T-cell (primary cell): ENCODE measurements at regions of chr5 and their contacts with region 1.

Region 1: DNA sequence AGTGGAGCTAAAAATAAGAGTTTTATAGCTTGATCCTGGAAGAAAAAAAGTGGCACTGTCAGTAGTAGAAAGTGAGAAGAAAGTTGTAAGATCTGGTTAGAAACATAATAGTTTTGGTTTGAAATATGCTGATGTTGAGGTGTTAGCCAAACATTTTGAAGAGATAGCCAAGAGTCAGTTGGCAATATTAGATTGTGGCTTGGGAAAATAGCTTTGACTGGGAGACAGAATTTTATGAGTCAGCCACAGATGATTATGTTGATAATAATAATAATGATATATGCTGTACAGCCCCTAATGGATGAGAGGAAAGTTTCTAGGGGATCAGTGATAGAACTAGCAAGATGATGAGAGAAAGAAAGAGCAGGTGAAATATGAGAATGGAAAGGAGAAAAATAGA is 12.4 kb upstream of the CDH18 start:
- DNase-seq: no peak
- ATAC-seq: no peak
- H3K4me3 ChIP-seq: no peak overlapping the region
- H3K4me3 Mint-ChIP-seq: no peak overlapping the region
- H3K27ac ChIP-seq: no peak overlapping the region
- H3K27ac Mint-ChIP-seq: no peak overlapping the region
- H3K4me1 ChIP-seq: no peaks in the 10 kb centered on the region
- H3K4me1 Mint-ChIP-seq: no peaks in the 10 kb centered on the region
- H3K27me3 ChIP-seq: no peaks in the 10 kb centered on the region
- H3K27me3 Mint-ChIP-seq: no peaks in the 10 kb centered on the region

Region 2: DNA sequence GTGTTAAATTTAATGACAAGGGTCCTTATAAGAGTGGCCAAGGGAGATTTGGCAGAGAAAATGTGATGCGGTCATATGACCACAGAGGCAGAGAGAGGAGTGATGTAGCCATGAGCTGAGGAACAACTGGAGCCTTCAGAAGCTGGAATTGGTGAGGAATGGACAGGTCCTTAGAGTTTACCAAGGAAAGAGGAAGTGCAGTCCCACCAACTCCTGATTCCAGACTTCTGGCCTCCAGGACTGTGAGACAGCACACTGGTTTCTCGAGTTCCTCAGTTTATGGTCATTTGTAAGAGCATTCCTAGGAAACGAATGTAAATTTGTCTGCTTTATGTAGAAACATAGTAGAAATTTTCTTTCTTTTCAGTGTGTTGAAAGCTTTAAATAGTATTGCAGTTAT is 422.5 kb before region 1 on chr5:
- CTCF ChIA-PET with region 1: no interaction called
- POLR2A ChIA-PET with region 1: interaction called in 1 of 2 experiments, 11 read pairs
- DNase-seq: no peak
- ATAC-seq: no peak
- H3K4me3 ChIP-seq: no peak overlapping the region
- H3K4me3 Mint-ChIP-seq: no peak overlapping the region
- H3K27ac ChIP-seq: no peak overlapping the region
- H3K27ac Mint-ChIP-seq: no peak overlapping the region
- H3K4me1 ChIP-seq: no peaks in the 10 kb centered on the region
- H3K4me1 Mint-ChIP-seq: no peaks in the 10 kb centered on the region
- H3K27me3 ChIP-seq: no peaks in the 10 kb centered on the region
- H3K27me3 Mint-ChIP-seq: no peaks in the 10 kb centered on the region

Region 3: DNA sequence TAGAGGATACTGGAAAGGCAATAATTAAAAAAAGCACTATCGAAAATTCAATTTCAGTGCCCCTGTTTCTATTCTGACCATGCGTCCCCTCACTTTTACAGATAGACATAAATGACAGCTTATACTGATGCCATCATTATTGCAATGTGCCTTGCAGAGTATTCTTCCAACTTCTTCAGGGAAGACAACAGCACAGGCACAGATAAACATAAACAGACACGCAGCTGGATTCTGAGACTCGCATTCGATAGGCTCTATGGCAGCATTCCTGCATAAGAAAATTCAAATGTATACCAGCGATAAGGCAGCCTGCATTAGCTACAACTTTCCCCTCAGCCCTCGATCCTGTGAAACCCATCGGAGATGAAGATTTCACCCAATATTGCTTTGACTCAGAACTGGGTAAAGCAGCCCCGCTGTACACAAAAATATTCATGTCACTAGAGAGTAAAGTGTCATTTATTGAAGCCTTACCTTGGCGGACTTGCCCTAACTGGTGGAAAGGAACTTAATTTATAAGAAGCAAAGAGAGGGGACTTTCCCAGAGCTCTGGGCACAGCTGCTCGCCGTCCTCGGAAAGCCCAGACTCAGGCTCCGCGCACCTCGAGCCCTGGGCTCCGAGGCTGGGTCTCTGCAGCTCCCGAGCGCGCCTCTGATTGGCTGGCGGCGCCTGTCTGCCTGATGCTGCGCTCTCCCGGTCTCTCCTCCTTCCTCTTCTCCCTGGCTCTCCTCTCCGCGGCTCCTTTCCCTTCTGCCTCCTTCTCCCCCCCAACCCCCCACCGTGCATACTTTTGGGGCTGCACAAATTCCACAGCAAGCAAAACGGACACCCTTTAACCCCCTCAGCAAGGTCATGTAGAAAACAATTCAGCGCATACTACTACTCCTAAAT is 12.6 kb before region 1 on chr5 and contains the start of gene CDH18:
- CTCF ChIA-PET with region 1: no interaction called
- POLR2A ChIA-PET with region 1: no interaction called
- DNase-seq: no peak
- ATAC-seq: no peak
- H3K4me3 ChIP-seq: no peak within 1 kb of the TSS
- H3K4me3 Mint-ChIP-seq: no peak within 1 kb of the TSS
- H3K27ac ChIP-seq: no peak within 1 kb of the TSS
- H3K27ac Mint-ChIP-seq: no peak within 1 kb of the TSS
- H3K4me1 ChIP-seq: no peaks in the 10 kb centered on the region
- H3K4me1 Mint-ChIP-seq: no peaks in the 10 kb centered on the region
- H3K27me3 ChIP-seq: no peaks in the 10 kb centered on the region
- H3K27me3 Mint-ChIP-seq: no peaks in the 10 kb centered on the region
- total RNA-seq, gene CDH18: not detected